ENCODE measurements at regions of chr11 and their contacts with region 1.

Region 1: DNA sequence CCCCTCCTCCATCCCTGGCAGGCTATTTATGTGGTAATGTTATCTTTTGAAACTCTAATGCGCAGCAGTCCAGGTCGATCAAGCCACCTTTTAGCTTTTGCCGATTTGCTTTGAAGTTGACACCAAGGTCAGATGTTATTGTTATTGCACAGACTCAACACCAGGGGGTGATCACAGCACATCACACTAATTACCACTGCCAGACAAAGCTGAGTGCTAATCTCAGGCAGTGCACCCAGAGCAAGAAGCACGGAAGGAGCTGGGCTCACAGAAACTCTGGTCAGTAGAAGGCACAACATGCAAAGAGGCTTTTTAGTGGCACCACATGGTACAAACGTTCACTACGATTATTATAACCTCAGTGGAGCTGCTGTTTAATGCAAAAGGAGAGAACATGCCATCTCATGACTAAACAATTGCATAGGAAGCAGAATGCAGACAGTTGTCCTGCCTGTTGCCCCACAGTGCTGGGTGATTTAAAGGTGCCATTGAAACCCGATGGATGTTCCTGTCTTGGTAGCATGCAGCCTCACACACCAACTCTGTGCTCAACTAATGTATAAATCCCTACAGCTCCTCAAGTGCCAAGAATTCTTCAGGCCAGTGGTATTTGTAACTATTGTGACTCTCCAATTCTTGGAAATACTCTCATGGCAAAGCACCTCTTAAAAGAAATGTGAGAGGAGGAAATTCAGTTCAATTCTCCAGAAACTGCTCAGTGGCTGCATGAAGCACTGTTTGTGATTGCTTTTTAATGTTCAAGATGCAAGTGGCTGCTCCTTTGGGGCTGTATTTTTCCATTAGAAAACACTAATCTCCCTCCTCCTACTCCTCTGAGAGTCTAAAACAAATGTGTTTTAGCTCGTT is 353.9 kb upstream of the DDI1 start:
- DNase-seq: peak; percentile 33
- H3K4me3 Mint-ChIP-seq: no peak overlapping the region
- H3K27ac Mint-ChIP-seq: no peak overlapping the region
- H3K4me1 Mint-ChIP-seq: peaks cover 8% of the 10 kb centered on the region
- H3K27me3 Mint-ChIP-seq: no peaks in the 10 kb centered on the region

Region 2: GRCh38 chr11:103609117-103610066 is 73.2 kb before region 1 on chr11:
- intact Hi-C with region 1: no loop called
- DNase-seq: no peak
- H3K4me3 Mint-ChIP-seq: no peak overlapping the region
- H3K27ac Mint-ChIP-seq: no peak overlapping the region
- H3K4me1 Mint-ChIP-seq: no peaks in the 10 kb centered on the region
- H3K27me3 Mint-ChIP-seq: no peaks in the 10 kb centered on the region

Region 3: DNA sequence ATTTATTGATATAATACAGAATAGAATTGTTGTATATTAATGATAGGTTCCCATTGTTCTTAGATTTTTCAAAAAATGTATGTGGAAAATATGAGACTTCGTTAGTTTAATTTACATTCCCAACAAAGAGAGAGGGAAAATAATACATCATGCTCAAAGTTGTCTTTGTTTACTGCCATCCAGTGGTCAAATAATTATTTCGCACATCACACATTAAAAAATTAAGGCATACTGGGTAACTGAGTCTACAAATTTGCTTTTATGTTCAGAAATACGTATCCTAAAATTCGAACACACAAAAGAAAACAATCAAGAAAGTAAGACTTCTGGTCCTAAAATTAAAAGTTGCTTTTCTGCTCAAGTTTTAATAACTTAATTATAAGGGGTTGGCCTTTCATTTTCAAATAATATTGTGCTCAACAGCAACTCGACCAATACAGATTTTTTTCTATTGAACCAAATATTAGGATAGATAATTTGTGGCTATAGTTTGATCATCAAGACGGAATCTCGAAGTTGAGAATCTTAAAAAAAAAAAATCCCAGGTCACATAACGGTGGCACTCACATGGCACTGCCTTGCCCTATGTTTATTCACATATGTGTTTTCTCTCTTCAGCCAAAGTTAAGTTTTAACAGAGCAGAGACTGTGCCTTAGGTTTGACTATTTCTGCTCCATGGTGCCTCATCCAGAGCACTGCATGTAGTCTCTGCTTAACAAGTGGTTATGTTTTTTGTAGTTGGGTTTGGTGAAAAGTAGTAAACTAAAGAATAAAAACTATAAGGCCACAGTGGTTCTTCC is 469.1 kb after region 1 on chr11:
- intact Hi-C with region 1: loop called (anchors 1 kb)
- DNase-seq: no peak
- H3K4me3 Mint-ChIP-seq: no peak overlapping the region
- H3K27ac Mint-ChIP-seq: no peak overlapping the region
- H3K4me1 Mint-ChIP-seq: no peaks in the 10 kb centered on the region
- H3K27me3 Mint-ChIP-seq: no peaks in the 10 kb centered on the region

Region 4: GRCh38 chr11:104333977-104334376 is 651.4 kb after region 1 on chr11:
- intact Hi-C with region 1: loop called (anchors 5 kb)
- DNase-seq: no peak
- H3K4me3 Mint-ChIP-seq: no peak overlapping the region
- H3K27ac Mint-ChIP-seq: no peak overlapping the region
- H3K4me1 Mint-ChIP-seq: no peaks in the 10 kb centered on the region
- H3K27me3 Mint-ChIP-seq: peaks cover 3% of the 10 kb centered on the region